ENCODE measurements at regions of chr10 and their contacts with region 1.

Region 1: DNA sequence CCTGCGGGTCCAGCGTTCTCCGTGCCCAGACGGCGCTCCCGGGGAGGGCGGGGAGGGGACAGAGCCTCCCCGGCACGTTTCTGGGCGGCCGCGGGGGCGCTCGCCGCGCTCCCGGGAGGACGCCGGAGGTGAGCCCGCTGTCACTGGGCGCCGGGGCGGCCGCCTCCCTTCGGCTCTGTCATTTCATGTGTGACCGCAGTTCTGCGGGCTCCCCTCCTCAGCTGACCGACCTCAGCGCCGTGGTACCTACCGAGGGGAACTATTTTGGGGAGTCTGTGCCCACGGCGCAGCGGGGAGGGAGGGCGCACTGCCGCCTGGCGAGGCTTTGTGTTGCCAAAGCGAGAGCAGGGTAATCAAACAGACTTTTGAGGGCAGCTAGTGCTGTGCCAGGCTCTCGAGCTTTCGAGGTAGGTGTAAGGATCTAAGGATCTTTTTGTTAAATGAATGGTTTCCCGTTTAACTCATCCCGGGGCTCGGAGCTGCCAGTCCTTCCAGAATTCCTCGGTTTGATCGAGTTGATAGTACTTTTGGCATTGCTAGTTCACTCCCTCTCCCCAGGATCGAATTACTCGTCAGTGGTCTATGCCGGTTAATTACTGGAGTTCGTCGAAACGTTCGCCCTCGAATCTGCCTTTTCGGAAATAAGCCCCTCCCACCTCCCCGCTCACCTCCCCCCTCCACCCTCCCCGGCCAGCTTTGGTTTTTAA is 1.9 kb downstream of the ARID5B start:
- DNase-seq: peak; percentile 39 to 83 (median 67)
- ATAC-seq: peak; percentile 41
- H3K4me3 ChIP-seq: peak overlapping the region; percentile 91 to 93
- H3K4me3 Mint-ChIP-seq: peak overlapping the region; percentile 84
- H3K27ac ChIP-seq: peak overlapping the region; percentile 94 to 95
- H3K27ac Mint-ChIP-seq: peak overlapping the region; percentile 97
- H3K4me1 ChIP-seq: peaks cover 24% of the 10 kb centered on the region
- H3K4me1 Mint-ChIP-seq: peaks cover 44% of the 10 kb centered on the region
- H3K27me3 ChIP-seq: no peaks in the 10 kb centered on the region
- H3K27me3 Mint-ChIP-seq: no peaks in the 10 kb centered on the region
- CTCF ChIP-seq: peak; percentile 22

Region 2: DNA sequence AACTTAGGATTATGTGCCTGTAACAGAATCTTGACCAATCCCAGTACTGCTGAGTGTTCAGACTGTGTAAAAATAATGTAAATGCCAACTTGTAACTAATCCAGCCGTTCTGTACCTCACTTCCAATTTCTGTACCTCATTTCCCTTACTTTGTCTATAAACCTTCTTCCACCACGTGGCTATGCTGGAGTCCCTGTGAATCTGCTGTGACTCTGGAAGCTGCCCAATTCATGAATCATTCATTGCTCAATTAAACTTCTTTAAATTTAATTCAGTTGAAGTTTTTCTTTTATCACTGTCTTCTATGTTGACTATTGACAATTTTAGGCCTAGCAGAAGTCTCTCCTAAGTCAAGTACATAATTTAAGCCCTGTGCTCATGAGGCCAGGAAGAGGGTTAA is 744.1 kb before region 1 on chr10:
- CTCF ChIA-PET with region 1: no interaction called
- POLR2A ChIA-PET with region 1: no interaction called
- intact Hi-C with region 1: no loop called
- DNase-seq: no peak
- ATAC-seq: no peak
- H3K4me3 ChIP-seq: no peak overlapping the region
- H3K4me3 Mint-ChIP-seq: no peak overlapping the region
- H3K27ac ChIP-seq: no peak overlapping the region
- H3K27ac Mint-ChIP-seq: no peak overlapping the region
- H3K4me1 ChIP-seq: no peaks in the 10 kb centered on the region
- H3K4me1 Mint-ChIP-seq: no peaks in the 10 kb centered on the region
- H3K27me3 ChIP-seq: no peaks in the 10 kb centered on the region
- H3K27me3 Mint-ChIP-seq: no peaks in the 10 kb centered on the region
- CTCF ChIP-seq: no peak

Region 3: GRCh38 chr10:61869774-61870525 is 33.4 kb before region 1 on chr10:
- CTCF ChIA-PET with region 1: interaction called, 3 read pairs
- POLR2A ChIA-PET with region 1: interaction called, 6 read pairs
- intact Hi-C with region 1: loop called in 1 of 2 experiments (anchors 2 kb)
- DNase-seq: no peak
- ATAC-seq: no peak
- H3K4me3 ChIP-seq: no peak overlapping the region
- H3K4me3 Mint-ChIP-seq: no peak overlapping the region
- H3K27ac ChIP-seq: no peak overlapping the region
- H3K27ac Mint-ChIP-seq: no peak overlapping the region
- H3K4me1 ChIP-seq: no peaks in the 10 kb centered on the region
- H3K4me1 Mint-ChIP-seq: peaks cover 7% of the 10 kb centered on the region
- H3K27me3 ChIP-seq: no peaks in the 10 kb centered on the region
- H3K27me3 Mint-ChIP-seq: peaks cover 2% of the 10 kb centered on the region
- CTCF ChIP-seq: no peak

Region 4: GRCh38 chr10:61943674-61944410 is 40.5 kb after region 1 on chr10:
- CTCF ChIA-PET with region 1: interaction called, 3 read pairs
- POLR2A ChIA-PET with region 1: interaction called, 5 read pairs
- intact Hi-C with region 1: loop called (anchors 2 kb)
- DNase-seq: peak in 2 of 9 experiments; percentile 54 to 75
- ATAC-seq: peak; percentile 61
- H3K4me3 ChIP-seq: peak overlapping the region; percentile 2 to 33
- H3K4me3 Mint-ChIP-seq: peak overlapping the region; percentile 71
- H3K27ac ChIP-seq: peak overlapping the region in 1 of 2 experiments; percentile 87
- H3K27ac Mint-ChIP-seq: peak overlapping the region; percentile 86
- H3K4me1 ChIP-seq: peaks cover 22% of the 10 kb centered on the region
- H3K4me1 Mint-ChIP-seq: peaks cover 57% of the 10 kb centered on the region
- H3K27me3 ChIP-seq: no peaks in the 10 kb centered on the region
- H3K27me3 Mint-ChIP-seq: no peaks in the 10 kb centered on the region
- CTCF ChIP-seq: no peak

Region 5: GRCh38 chr10:62082729-62083411 is 179.5 kb after region 1 on chr10:
- CTCF ChIA-PET with region 1: no interaction called
- POLR2A ChIA-PET with region 1: interaction called, 5 read pairs
- intact Hi-C with region 1: loop called in 1 of 2 experiments (anchors 2 kb)
- DNase-seq: peak in 8 of 9 experiments; percentile 9 to 68 (median 36)
- ATAC-seq: peak; percentile 86
- H3K4me3 ChIP-seq: no peak overlapping the region
- H3K4me3 Mint-ChIP-seq: peak overlapping the region; percentile 46
- H3K27ac ChIP-seq: peak overlapping the region in 1 of 2 experiments; percentile 68
- H3K27ac Mint-ChIP-seq: peak overlapping the region; percentile 55
- H3K4me1 ChIP-seq: peaks cover 19% of the 10 kb centered on the region
- H3K4me1 Mint-ChIP-seq: peaks cover 43% of the 10 kb centered on the region
- H3K27me3 ChIP-seq: no peaks in the 10 kb centered on the region
- H3K27me3 Mint-ChIP-seq: no peaks in the 10 kb centered on the region
- CTCF ChIP-seq: no peak

Region 6: GRCh38 chr10:62199584-62199983 is 296.2 kb after region 1 on chr10:
- CTCF ChIA-PET with region 1: no interaction called
- POLR2A ChIA-PET with region 1: no interaction called
- intact Hi-C with region 1: no loop called
- DNase-seq: peak in 2 of 9 experiments; percentile 34 to 65
- ATAC-seq: peak; percentile 82
- H3K4me3 ChIP-seq: no peak overlapping the region
- H3K4me3 Mint-ChIP-seq: no peak overlapping the region
- H3K27ac ChIP-seq: no peak overlapping the region
- H3K27ac Mint-ChIP-seq: peak overlapping the region; percentile 14
- H3K4me1 ChIP-seq: peaks cover 7% of the 10 kb centered on the region
- H3K4me1 Mint-ChIP-seq: peaks cover 10% of the 10 kb centered on the region
- H3K27me3 ChIP-seq: no peaks in the 10 kb centered on the region
- H3K27me3 Mint-ChIP-seq: no peaks in the 10 kb centered on the region
- CTCF ChIP-seq: no peak

Region 7: GRCh38 chr10:62637249-62638061 is 734.1 kb after region 1 on chr10:
- CTCF ChIA-PET with region 1: no interaction called
- POLR2A ChIA-PET with region 1: interaction called, 4 read pairs
- intact Hi-C with region 1: loop called in 1 of 2 experiments (anchors 10 kb)
- DNase-seq: peak; percentile 25 to 90 (median 68)
- ATAC-seq: peak; percentile 84
- H3K4me3 ChIP-seq: peak overlapping the region; percentile 48
- H3K4me3 Mint-ChIP-seq: no peak overlapping the region
- H3K27ac ChIP-seq: peak overlapping the region; percentile 77 to 88
- H3K27ac Mint-ChIP-seq: no peak overlapping the region
- H3K4me1 ChIP-seq: peaks cover 28% of the 10 kb centered on the region
- H3K4me1 Mint-ChIP-seq: peaks cover 14% of the 10 kb centered on the region
- H3K27me3 ChIP-seq: no peaks in the 10 kb centered on the region
- H3K27me3 Mint-ChIP-seq: no peaks in the 10 kb centered on the region
- CTCF ChIP-seq: no peak